ENCODE measurements at regions of chr5 and their contacts with region 1.

Region 1: DNA sequence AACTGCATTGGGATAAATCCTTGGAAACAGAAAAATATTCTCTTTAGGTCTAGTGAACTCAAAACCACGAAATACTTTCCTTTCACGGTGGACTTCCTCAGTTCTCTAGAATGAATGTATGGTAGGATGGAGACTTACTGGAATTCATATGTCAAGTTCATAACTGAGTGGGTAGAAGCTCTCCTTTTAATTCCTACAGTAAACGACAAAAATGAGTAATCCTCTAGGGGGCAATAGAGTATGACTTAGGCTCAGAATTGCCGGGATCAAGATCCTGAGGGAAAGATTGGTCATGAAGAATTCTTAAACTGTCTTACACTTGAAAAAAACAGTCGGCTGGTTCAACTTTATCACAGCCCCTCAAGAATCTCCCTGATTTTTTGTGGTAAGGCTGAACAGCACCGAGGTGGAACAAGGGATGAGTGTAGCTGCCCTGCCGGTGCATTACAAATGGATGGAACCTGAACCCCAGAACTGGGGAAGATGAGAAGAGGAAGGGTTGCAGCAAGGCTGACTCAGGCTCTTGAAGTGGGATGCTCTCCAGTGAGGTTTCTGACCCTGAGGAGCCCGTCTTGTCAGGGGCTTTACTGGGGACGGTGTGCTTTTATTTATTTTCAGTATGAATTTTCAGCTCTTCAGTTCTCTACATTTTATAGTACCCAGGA is 14.0 kb upstream of the LOX start:
- DNase-seq: no peak
- H3K4me3 ChIP-seq: no peak overlapping the region
- H3K27ac ChIP-seq: peak overlapping the region in 1 of 2 experiments; percentile 93; a peak in 2 of 4 replicates
- H3K4me1 ChIP-seq: peaks cover 0 to 32% of the 10 kb centered on the region in 2 experiments; a peak in 3 of 4 replicates
- H3K27me3 ChIP-seq: no peaks in the 10 kb centered on the region
- CTCF ChIP-seq: peak; percentile 66
- EP300 ChIP-seq: no peak
- RAD21 ChIP-seq: peak; percentile 57

Region 2: DNA sequence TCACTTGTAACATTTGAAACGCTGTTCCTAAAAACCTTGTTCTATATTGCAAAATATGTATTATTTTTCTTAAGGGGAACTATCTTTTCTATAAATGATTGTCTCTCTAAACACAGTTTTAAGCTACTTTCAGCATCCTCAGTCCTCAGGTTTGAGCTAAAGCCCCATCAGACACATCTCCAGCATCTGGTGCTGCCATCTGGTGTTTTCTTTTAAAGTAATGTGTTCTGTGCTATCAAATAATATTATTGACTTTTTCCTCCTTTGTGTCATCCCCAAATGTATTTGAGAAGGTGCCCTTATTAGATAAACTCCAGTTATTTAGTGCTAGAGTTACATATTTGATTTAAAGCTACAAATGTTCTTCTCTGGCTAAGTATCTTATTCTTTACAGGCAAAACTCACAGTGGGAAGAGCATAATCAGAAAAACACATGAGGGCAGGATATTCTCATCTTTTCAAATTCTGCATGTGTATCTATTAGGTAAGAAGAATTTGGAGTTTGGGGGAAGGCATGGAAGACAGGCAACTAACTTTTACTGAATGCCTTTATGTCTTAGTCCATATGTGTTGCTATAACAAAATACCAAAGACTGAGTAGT is 64.8 kb after region 1 on chr5:
- CTCF ChIA-PET with region 1: interaction called, 15 read pairs
- POLR2A ChIA-PET with region 1: no interaction called
- DNase-seq: peak; percentile 55
- H3K4me3 ChIP-seq: no peak overlapping the region
- H3K27ac ChIP-seq: 0 out of 4 replicates have a peak overlapping the region, but pooled peaks of 1 of the 2 experiments have one; percentile 23
- H3K4me1 ChIP-seq: peaks cover 3 to 33% of the 10 kb centered on the region in 2 experiments
- H3K27me3 ChIP-seq: no peaks in the 10 kb centered on the region
- CTCF ChIP-seq: peak; percentile 71
- EP300 ChIP-seq: no peak
- RAD21 ChIP-seq: peak; percentile 75